PC-9 (cell line): ENCODE measurements at regions of chr12 and their contacts with region 1.

Region 1: DNA sequence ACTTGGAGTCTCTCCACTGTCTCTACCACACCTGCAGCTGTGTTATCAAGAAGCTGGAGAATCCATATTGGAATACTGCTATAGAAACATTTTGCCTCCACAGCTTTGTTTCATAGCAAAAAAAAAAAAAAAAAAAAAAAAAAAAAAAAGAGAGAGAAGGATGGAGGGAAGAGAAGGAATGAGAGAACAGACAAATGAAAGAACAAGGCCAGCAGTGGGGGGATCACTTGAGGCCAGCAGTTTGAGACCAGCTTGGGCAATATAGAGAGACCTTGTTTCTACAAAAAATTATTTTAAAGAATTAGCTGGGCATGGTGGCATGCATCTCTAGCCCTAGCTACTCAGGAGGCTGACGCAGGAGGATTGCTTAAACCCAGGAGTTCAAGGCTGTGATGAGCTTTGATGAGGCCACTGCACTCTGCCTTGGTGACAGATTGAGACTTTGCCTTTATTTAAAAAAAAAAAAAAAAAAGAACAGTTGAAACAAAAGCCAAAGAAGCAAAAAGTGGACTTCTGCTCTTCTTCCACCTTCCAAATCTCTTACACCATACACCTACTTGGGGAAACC is 8.1 kb downstream of the VEZT start:
- DNase-seq: no peak
- H3K4me3 ChIP-seq: no peak overlapping the region
- H3K27ac ChIP-seq: no peak overlapping the region
- H3K4me1 ChIP-seq: peaks cover 18% of the 10 kb centered on the region
- H3K27me3 ChIP-seq: no peaks in the 10 kb centered on the region
- CTCF ChIP-seq: no peak

Region 2: GRCh38 chr12:94725375-94726168 is 500.2 kb before region 1 on chr12:
- CTCF ChIA-PET with region 1: no interaction called
- POLR2A ChIA-PET with region 1: interaction called, 24 read pairs
- intact Hi-C with region 1: no loop called
- DNase-seq: peak; percentile 22 to 41
- H3K4me3 ChIP-seq: no peak overlapping the region
- H3K27ac ChIP-seq: no peak overlapping the region
- H3K4me1 ChIP-seq: no peaks in the 10 kb centered on the region
- H3K27me3 ChIP-seq: no peaks in the 10 kb centered on the region
- CTCF ChIP-seq: peak; percentile 54

Region 3: GRCh38 chr12:95304673-95305198 is 79.0 kb after region 1 on chr12:
- CTCF ChIA-PET with region 1: interaction called, 12 read pairs
- POLR2A ChIA-PET with region 1: no interaction called
- intact Hi-C with region 1: no loop called
- DNase-seq: no peak
- H3K4me3 ChIP-seq: no peak overlapping the region
- H3K27ac ChIP-seq: no peak overlapping the region; the same call in 1 of the 2 replicates
- H3K4me1 ChIP-seq: peaks cover 26% of the 10 kb centered on the region
- H3K27me3 ChIP-seq: no peaks in the 10 kb centered on the region
- CTCF ChIP-seq: no peak

Region 4: DNA sequence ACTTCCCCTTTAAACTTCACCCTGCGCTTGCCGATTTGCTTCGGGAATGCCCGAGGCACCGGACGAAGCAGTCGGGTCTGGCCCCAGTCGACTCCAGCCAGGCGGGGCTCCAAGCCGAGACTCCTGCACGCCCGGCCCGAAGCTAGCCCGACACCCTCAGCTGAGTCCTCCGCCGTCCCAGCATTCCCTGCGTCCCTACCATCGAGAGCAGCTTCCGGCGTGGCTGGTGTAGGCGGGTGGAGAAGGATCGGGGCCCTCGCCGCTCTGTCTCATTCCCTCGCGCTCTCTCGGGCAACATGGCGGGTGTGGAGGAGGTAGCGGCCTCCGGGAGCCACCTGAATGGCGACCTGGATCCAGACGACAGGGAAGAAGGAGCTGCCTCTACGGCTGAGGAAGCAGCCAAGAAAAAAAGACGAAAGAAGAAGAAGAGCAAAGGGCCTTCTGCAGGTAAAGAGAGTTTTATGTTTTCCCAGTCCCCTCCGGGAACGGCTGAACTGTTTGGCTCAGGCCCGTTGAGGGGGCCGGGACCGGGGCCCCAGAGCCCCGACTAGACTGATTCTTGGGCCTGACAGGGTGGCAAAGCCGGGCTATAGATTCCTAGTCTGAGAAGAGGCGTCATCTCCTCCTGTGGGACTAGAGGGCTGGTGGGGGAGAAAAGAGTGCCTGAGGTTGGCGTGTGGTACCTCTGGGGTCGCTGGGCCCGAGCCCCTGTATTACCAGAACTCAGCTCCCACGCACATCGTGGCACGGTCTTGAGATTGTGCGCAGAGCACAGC is 248.3 kb after region 1 on chr12 and contains the start of gene METAP2:
- CTCF ChIA-PET with region 1: no interaction called
- POLR2A ChIA-PET with region 1: interaction called, 15 read pairs
- intact Hi-C with region 1: no loop called
- DNase-seq: peak; percentile 91 to 96
- H3K4me3 ChIP-seq: peak within 1 kb of the TSS; percentile 94
- H3K27ac ChIP-seq: peak within 1 kb of the TSS; percentile 78
- H3K4me1 ChIP-seq: peaks cover 20% of the 10 kb centered on the region
- H3K27me3 ChIP-seq: no peaks in the 10 kb centered on the region
- CTCF ChIP-seq: no peak
- total RNA-seq, gene METAP2: 74.4 and 93.8 TPM in 2 replicates